ENCODE measurements at regions of chr1 and their contacts with region 1.

Region 1: GRCh38 chr1:61741711-61742619 is at the start of gene PATJ:
- DNase-seq: peak; percentile 80 to 95
- H3K4me3 ChIP-seq: peak within 1 kb of the TSS; percentile 99
- H3K27ac ChIP-seq: peak within 1 kb of the TSS; percentile 82
- H3K4me1 ChIP-seq: peaks cover 47% of the 10 kb centered on the region
- H3K27me3 ChIP-seq: no peaks in the 10 kb centered on the region
- CTCF ChIP-seq: no peak
- total RNA-seq, gene PATJ: 86.8 and 91.0 TPM in 2 replicates

Region 2: DNA sequence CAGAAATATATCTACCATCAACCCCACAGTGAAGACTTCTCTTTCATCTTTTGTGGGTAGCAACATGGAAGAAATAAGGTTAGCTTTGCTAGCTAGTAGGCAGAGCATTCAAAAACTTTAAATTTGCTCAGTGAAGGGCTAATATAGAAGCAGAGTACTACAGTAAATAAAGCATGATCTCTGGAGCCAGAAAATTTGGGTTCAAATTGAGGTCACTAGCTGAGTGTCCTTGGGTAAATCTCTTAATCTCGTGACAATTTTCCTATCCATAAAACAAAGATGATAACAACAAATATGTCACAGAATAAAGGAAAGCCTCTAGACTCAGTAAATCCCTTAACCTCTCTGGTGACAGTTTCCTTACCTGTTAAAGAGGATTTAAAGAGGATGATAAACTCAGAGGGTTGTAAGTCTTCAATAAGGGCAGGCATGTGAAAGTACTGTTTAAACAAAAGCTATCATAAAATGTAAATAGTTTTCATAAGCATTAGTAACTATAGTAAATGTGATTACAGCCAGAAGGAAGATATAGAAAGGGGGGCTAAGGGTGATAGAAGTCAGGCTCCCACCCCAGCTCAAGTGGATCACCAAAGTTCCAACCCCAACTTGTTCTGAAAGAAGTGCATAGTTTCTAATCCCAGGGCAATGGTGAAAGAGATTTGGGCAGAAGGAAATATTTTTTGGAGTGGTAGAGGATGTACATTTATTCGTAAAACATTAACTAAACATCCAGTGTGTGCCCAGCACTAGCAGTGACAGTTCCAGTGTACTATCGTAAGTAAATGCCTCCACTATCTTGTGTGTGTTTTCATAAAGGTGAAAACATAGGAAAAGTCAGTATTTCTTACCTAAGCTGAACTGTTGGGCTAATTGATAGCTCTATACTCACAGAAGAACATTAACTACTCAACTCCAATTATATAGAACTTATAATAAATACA is 41.8 kb before region 1 on chr1:
- CTCF ChIA-PET with region 1: interaction called, 10 read pairs
- POLR2A ChIA-PET with region 1: no interaction called
- intact Hi-C with region 1: no loop called
- DNase-seq: no peak
- H3K4me3 ChIP-seq: no peak overlapping the region
- H3K27ac ChIP-seq: no peak overlapping the region
- H3K4me1 ChIP-seq: no peaks in the 10 kb centered on the region
- H3K27me3 ChIP-seq: no peaks in the 10 kb centered on the region
- CTCF ChIP-seq: no peak

Region 3: DNA sequence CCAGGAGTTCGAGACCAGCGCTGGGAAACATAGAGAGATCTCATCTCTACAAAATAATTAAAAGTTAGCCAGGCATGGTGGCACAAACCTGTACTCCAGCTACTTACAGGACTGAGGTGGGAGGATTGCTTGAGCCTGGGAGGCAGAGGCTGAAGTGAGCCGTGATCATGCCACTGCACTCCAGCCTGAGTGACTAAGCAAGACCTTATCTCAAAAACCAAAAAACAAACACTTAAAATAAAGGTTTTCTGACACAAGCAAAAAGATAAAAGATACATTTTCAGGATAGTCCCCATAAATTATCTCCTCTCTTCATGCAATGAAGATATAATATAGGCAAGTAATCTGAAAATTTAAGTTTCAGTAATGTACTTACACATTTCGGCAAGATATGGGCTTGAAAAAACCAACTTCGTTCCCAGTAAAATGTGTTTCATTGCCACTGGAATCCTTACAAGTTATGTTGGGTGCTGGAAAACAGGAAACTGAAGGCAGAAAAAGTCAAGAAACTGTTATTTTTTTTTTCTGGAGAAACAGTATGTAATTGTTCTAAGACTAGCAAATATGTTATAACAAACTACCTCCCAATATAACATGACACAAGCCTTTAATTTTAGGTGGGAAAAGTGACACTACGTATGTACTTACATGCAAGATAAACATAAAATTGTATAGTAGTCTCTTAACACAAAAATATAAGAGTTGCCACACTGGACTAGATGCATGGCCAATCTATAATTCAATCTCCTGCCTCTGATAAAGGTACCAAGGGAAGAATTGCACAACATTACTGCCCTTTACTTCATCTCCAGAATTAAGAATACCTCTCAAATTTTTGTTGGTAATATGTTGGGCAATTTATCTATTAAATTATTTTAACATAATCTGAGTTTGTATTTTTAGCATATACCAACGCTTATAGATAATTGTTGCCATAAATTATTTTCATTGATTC is 32.7 kb before region 1 on chr1:
- CTCF ChIA-PET with region 1: no interaction called
- POLR2A ChIA-PET with region 1: interaction called, 10 read pairs
- intact Hi-C with region 1: no loop called
- DNase-seq: no peak
- H3K4me3 ChIP-seq: no peak overlapping the region
- H3K27ac ChIP-seq: no peak overlapping the region
- H3K4me1 ChIP-seq: peaks cover 13% of the 10 kb centered on the region; the same call in 1 of the 2 replicates
- H3K27me3 ChIP-seq: no peaks in the 10 kb centered on the region
- CTCF ChIP-seq: no peak

Region 4: DNA sequence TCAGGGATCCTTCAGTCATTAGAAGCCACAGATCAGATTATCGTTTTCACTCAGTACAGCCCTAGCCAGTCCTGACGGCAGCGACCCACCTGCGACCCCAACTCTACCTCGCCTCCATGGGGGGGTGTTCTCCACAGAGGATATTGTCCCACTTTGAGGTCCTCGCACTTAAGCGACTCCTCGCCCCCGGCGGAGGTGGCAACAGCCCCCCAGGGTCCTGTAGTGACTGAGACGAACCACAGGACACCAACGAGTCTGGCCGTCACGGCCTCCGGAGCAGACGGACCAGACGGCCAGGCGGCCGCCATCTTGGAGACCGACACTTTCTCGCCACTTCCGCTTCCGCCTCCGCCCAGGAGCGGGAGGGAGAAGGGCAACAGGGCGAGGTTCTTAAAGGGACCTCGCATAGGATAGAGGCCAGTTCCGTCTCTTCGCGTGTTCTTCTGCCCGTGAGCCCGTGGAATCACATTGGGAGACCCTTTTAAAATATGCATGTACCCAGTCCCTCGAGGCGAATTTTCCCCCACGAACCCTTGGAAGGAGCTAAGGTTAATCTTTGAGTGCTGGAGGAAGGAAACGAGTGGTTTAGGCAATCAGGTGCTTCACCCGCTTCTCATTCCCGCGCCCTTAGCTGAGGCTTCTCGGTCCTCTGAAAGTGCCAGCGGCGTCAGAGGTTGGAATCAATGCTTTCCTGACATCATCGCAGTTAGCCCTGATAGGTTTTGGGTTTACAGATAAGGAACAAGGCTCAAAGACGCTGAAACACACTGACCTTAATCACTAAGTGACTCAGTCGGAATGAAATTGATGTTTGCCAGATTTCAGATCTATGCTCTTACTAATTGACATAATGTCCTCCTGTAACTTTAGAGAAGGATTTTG is 16.9 kb before region 1 on chr1 and contains the start of gene TM2D1:
- CTCF ChIA-PET with region 1: no interaction called
- POLR2A ChIA-PET with region 1: interaction called, 7 read pairs
- intact Hi-C with region 1: loop called (anchors 1 kb)
- DNase-seq: peak; percentile 87 to 90
- H3K4me3 ChIP-seq: peak within 1 kb of the TSS; percentile 95
- H3K27ac ChIP-seq: peak within 1 kb of the TSS; percentile 74
- H3K4me1 ChIP-seq: peaks cover 28% of the 10 kb centered on the region; the same call in 1 of the 2 replicates
- H3K27me3 ChIP-seq: no peaks in the 10 kb centered on the region
- CTCF ChIP-seq: no peak
- total RNA-seq, gene TM2D1: 36.8 and 42.0 TPM in 2 replicates

Measured in PC-9 (cell line).